HEK293 (cell line): ENCODE measurements at regions of chr9 and their contacts with region 1.

Region 1: DNA sequence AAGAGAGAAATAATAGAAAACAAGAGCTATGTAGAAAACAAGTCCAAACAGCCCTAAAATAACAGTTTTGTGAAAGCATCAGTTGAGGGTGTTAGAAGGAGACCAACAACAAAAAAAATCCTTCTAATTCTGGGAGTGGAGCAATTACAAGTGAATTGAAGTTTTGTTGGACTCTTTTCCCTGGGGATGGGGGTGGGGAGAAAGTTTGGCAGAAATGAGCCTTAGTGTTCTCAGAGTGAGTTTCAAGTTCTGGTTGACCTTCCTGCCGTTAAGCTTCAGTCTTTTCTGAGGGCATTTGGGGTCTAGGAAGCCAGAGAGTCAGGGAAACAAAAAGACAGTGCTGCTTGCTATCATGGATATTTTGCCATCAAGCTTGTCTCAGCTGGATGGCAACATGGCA is 106.3 kb upstream of the TRIM32 start:
- H3K4me3 ChIP-seq: no peak overlapping the region
- H3K27ac ChIP-seq: no peak overlapping the region
- H3K4me1 ChIP-seq: no peaks in the 10 kb centered on the region
- CTCF ChIP-seq: no peak

Region 2: DNA sequence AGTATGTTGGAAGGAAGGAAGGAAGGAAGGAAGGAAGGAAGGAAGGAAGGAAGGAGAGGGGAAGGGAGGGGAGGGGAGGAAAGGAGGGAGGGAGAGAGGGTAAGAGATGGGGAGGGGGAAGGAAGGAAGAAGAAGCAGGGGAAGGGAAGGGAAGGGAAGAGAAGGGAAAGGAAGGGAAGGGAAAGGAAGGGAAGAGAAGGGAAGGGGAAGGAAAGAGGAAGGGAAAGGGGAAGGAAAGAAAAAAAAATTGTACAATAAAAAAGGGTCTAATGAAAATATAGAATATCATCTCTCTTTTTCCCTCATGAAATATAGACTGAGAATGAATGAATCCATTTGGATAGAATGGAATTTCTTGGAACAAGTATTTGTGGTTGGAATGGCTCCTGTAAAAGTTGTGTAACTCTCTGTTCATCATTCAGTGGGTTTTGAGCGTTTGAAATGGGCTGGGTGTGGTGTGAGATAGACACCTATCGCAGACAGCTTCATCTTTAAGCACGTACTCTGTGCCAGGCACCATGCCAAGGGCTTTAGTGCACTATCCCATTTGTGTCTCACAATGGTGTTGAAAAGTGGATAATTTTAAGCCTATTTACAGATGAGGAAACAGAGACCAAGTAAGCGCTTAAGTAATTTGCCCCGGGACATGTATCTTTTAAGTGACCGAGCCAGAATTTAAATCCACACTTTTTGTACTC is 438.8 kb before region 1 on chr9:
- CTCF ChIA-PET with region 1: interaction called, 12 read pairs
- POLR2A ChIA-PET with region 1: no interaction called
- H3K4me3 ChIP-seq: no peak overlapping the region
- H3K27ac ChIP-seq: no peak overlapping the region
- H3K4me1 ChIP-seq: no peaks in the 10 kb centered on the region
- CTCF ChIP-seq: no peak

Region 3: DNA sequence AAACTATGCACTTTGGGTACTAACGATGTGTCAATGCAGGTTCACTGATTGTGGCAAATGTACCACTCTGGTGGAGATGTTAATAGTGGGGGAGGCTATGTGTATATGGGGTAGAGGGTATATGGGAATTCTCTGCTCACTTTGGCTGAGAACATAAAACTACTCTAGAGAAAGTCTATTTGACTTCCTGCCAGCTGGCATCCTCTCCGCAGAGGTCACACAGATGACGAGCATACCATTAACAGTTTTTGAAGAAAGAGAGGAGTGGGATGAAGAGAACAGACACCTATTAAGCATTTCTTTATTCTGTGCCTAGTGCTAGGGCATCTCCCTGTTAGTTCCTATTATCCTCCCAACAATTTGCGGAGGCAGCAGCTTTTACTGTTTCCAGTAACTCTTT is 47.9 kb after region 1 on chr9:
- CTCF ChIA-PET with region 1: no interaction called
- POLR2A ChIA-PET with region 1: no interaction called
- H3K4me3 ChIP-seq: no peak overlapping the region
- H3K27ac ChIP-seq: no peak overlapping the region
- H3K4me1 ChIP-seq: no peaks in the 10 kb centered on the region
- CTCF ChIP-seq: no peak